ENCODE measurements at regions of chr1 and their contacts with region 1.

Region 1: GRCh38 chr1:116139592-116140134 is 28.5 kb downstream of the MAB21L3 start:
- DNase-seq: peak; percentile 15
- H3K4me3 ChIP-seq: no peak overlapping the region
- H3K27ac ChIP-seq: no peak overlapping the region
- H3K4me1 ChIP-seq: no peaks in the 10 kb centered on the region
- H3K27me3 ChIP-seq: no peaks in the 10 kb centered on the region
- CTCF ChIP-seq: no peak

Region 2: DNA sequence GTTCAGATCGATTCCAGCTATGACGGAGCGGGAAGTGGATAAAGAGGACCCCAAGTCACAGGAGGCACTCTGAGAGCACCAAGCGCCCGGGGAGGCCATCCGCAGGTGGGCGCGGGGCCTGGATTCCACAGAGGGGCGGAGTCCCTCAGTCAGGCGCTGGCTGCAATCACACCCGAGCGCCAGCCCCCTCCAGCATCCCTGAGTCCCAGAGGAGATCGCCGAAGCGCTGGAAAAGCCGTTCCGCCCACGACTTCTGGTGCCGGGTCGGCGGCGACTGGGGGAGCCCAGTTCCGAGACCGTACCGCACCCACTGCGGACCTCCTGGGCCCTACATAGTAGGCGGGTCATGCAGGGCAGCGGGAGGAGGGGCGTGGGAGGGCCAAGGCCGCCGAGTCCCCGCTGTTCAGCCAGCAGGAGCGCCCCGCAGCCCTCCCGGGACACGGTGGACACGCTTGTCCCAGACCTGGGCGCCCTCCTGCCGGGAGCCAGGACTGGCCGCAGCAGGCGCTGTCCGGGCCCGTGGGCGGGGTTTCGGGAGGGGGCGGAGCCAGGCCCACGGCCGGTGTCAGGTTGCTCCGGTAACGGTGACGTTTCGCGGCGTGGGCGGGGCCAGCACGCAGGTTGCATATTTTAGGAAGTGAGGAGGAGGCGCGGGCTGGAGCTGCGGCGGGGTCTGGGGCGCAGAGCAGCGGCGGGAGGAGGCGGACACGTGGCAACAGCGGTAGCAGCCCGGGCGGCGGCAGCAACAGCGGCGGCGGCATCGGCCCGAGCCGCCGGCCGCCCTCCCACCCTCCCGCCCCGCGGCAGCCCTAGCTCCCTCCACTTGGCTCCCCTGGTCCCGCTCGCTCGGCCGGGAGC is 233.2 kb after region 1 on chr1 and contains the start of gene ATP1A1:
- intact Hi-C with region 1: no loop called
- DNase-seq: peak; percentile 99
- H3K4me3 ChIP-seq: peak within 1 kb of the TSS; percentile 85
- H3K27ac ChIP-seq: peak within 1 kb of the TSS; percentile 90
- H3K4me1 ChIP-seq: peaks cover 6% of the 10 kb centered on the region
- H3K27me3 ChIP-seq: no peaks in the 10 kb centered on the region
- CTCF ChIP-seq: no peak
- total RNA-seq, gene ATP1A1: 718 to 936 TPM

Region 3: GRCh38 chr1:116485071-116485735 is 345.5 kb after region 1 on chr1:
- intact Hi-C with region 1: loop called (anchors 2 kb)
- DNase-seq: peak; percentile 94
- H3K4me3 ChIP-seq: no peak overlapping the region
- H3K27ac ChIP-seq: peak overlapping the region; percentile 59
- H3K4me1 ChIP-seq: peaks cover 16% of the 10 kb centered on the region
- H3K27me3 ChIP-seq: no peaks in the 10 kb centered on the region
- CTCF ChIP-seq: peak; percentile 90

Region 4: DNA sequence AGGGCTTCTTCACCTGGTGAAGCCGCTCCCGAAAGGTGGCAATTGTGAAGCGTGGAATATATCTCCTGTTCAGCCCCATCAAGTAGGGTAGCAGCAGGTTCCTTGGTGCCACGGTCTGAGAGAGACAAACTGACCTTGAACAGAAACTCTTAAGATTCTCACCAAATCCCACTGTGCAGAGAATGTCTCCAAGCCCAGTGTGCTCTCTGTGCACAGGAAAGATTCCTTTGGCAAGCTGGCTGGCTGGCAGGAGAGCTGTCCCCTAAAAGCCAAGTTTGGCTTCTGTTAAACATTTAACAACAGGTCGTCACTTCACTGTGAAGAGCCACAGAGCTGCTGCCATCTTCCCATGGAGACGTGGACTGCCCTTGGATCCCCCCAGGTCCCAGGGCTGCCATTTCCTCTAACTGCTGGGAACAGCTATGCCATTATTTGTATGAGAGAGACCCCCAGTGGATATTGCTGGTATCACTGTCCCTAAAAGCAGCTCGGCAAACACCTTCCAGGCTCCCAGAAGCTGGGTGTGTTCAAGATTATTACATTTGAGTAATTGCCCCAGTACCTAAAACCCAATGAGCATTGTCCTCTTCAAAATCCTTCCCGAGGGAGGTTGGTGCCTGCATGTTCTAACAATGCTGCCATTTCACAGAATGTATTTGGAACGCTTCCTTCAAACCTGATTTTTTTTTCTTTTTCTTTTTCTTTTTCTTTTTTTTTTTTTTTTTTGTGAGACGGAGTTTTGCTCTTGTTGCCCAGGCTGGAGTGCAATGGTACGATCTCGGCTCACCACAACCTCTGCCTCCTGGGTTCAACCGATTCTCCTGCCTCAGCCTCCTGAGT is 359.3 kb after region 1 on chr1:
- intact Hi-C with region 1: loop called (anchors 5 kb)
- DNase-seq: peak; percentile 84
- H3K4me3 ChIP-seq: no peak overlapping the region
- H3K27ac ChIP-seq: no peak overlapping the region
- H3K4me1 ChIP-seq: no peaks in the 10 kb centered on the region
- H3K27me3 ChIP-seq: no peaks in the 10 kb centered on the region
- CTCF ChIP-seq: peak; percentile 77